CD4-positive, alpha-beta memory T cell (primary cell): ENCODE measurements at regions of chr5 and their contacts with region 1.

Region 1: GRCh38 chr5:43556857-43557542 is at the start of gene PAIP1:
- DNase-seq: peak; percentile 86 to 91 (median 88)
- H3K4me3 ChIP-seq: peak within 1 kb of the TSS; percentile 79 to 84
- H3K4me3 Mint-ChIP-seq: peak within 1 kb of the TSS; percentile 91 to 98 (median 94)
- H3K27ac ChIP-seq: peak within 1 kb of the TSS; percentile 84
- H3K27ac Mint-ChIP-seq: peak within 1 kb of the TSS; percentile 93 to 99 (median 97)
- H3K4me1 ChIP-seq: peaks cover 41% of the 10 kb centered on the region
- H3K4me1 Mint-ChIP-seq: peaks cover 7 to 13% (median 10%) of the 10 kb centered on the region in 4 donors
- H3K27me3 ChIP-seq: no peaks in the 10 kb centered on the region
- H3K27me3 Mint-ChIP-seq: no peaks in the 10 kb centered on the region
- total RNA-seq, gene PAIP1: 36.0 to 38.0 TPM

Region 2: DNA sequence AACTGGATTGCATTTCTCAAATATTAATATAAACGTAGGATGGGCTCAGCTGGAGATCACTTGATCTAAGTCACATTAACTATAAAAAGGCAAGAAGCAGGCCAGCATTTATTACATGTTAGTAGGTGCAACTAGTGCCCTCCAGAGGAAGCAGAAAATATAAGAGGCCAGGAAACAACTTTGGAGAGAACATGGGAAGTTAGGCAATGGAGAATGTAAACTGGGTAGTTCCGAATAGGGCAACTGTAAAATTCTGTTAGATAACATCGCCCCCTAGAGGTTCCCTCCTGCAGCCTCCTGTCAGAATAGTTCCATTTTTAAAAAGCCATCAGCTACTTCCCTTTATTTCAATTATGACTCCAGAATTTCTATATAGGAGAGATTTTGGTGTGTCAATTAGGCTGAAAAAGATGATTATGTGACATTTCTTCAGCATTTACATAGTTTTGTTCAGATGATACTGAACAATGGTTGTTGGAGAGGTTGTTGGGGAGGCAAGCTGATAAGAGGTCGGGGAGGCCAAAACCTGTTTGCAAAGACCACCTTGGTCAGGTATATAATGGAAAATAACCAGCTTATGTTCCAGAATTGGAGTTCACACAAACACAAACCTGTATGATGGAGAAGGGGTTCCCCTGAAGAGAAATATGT is 167.2 kb before region 1 on chr5:
- CTCF ChIA-PET with region 1: no interaction called
- POLR2A ChIA-PET with region 1: no interaction called
- intact Hi-C with region 1: loop called (anchors 5 kb)
- DNase-seq: peak; percentile 45 to 56 (median 53)
- H3K4me3 ChIP-seq: no peak overlapping the region
- H3K4me3 Mint-ChIP-seq: no peak overlapping the region
- H3K27ac ChIP-seq: no peak overlapping the region
- H3K27ac Mint-ChIP-seq: peak overlapping the region in 3 of 7 donors; percentile 0 to 47 (median 31)
- H3K4me1 ChIP-seq: peaks cover 11% of the 10 kb centered on the region
- H3K4me1 Mint-ChIP-seq: peaks cover 6 to 30% (median 21%) of the 10 kb centered on the region in 4 donors
- H3K27me3 ChIP-seq: no peaks in the 10 kb centered on the region
- H3K27me3 Mint-ChIP-seq: no peaks in the 10 kb centered on the region

Region 3: GRCh38 chr5:43514816-43515677 is 42.0 kb before region 1 on chr5 and contains the start of gene C5orf34:
- CTCF ChIA-PET with region 1: no interaction called
- POLR2A ChIA-PET with region 1: interaction called, 7 read pairs
- intact Hi-C with region 1: loop called (anchors 1 kb)
- DNase-seq: peak; percentile 90 to 93 (median 91)
- H3K4me3 ChIP-seq: peak within 1 kb of the TSS; percentile 54 to 92
- H3K4me3 Mint-ChIP-seq: peak within 1 kb of the TSS; percentile 90 to 97 (median 94)
- H3K27ac ChIP-seq: peak within 1 kb of the TSS; percentile 76
- H3K27ac Mint-ChIP-seq: peak within 1 kb of the TSS; percentile 90 to 98 (median 95)
- H3K4me1 ChIP-seq: peaks cover 25% of the 10 kb centered on the region
- H3K4me1 Mint-ChIP-seq: peaks cover 22 to 35% (median 27%) of the 10 kb centered on the region in 4 donors
- H3K27me3 ChIP-seq: no peaks in the 10 kb centered on the region
- H3K27me3 Mint-ChIP-seq: no peaks in the 10 kb centered on the region
- total RNA-seq, gene C5orf34: 2.5 to 2.9 TPM

Region 4: DNA sequence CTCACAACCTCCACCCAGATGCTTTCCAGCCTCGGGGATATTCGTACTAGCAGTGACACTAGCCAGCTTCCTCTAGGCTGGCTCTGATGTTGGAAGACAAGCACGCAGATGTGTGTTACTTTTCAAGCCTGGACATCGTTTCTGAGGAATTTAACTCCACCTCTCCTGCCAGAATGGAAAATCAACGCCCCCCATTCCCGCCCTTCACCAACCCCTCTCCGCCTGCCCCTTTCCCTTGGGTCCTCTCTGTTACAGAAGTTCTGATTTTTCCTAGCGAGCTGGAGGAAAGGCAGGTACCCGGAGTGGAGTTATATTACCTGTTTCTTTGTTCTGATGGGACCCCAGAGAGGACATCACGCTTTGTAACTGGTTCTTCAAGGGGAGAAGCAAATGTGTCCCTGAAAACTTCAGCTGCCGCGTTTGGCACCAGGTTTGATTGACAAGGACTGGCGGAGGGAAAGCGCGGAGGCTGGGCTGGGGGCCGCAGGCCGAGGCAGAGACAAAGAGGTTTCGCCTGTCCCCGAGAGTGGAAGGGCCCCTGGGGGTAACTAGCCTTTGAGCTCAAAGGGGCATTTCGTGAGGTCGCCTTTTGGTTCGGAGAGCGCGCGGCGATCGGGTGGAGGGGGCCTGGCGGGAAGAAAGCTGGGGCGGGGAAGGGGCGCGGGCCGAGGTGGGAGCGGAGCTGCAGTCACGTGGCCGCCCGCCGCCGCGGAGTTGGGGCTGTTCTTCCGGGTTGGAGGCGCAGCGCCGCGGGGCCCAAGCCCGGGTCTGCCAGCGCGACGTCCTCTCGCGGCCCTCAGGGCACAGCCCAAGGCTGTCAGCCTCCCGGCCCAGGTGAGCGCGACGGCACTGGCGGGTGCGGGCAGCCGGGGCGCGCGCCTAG is 45.7 kb after region 1 on chr5 and contains the start of gene NNT:
- CTCF ChIA-PET with region 1: interaction called, 9 read pairs
- POLR2A ChIA-PET with region 1: interaction called, 49 read pairs
- intact Hi-C with region 1: loop called (anchors 1 kb)
- DNase-seq: peak; percentile 75 to 84 (median 80)
- H3K4me3 ChIP-seq: peak within 1 kb of the TSS; percentile 91 to 99
- H3K4me3 Mint-ChIP-seq: peak within 1 kb of the TSS; percentile 90 to 98 (median 96)
- H3K27ac ChIP-seq: peak within 1 kb of the TSS; percentile 88
- H3K27ac Mint-ChIP-seq: peak within 1 kb of the TSS; percentile 91 to 98 (median 94)
- H3K4me1 ChIP-seq: peaks cover 38% of the 10 kb centered on the region
- H3K4me1 Mint-ChIP-seq: peaks cover 18 to 63% (median 49%) of the 10 kb centered on the region in 4 donors
- H3K27me3 ChIP-seq: no peaks in the 10 kb centered on the region
- H3K27me3 Mint-ChIP-seq: no peaks in the 10 kb centered on the region
- total RNA-seq, gene NNT: 56.1 to 57.6 TPM

Region 5: DNA sequence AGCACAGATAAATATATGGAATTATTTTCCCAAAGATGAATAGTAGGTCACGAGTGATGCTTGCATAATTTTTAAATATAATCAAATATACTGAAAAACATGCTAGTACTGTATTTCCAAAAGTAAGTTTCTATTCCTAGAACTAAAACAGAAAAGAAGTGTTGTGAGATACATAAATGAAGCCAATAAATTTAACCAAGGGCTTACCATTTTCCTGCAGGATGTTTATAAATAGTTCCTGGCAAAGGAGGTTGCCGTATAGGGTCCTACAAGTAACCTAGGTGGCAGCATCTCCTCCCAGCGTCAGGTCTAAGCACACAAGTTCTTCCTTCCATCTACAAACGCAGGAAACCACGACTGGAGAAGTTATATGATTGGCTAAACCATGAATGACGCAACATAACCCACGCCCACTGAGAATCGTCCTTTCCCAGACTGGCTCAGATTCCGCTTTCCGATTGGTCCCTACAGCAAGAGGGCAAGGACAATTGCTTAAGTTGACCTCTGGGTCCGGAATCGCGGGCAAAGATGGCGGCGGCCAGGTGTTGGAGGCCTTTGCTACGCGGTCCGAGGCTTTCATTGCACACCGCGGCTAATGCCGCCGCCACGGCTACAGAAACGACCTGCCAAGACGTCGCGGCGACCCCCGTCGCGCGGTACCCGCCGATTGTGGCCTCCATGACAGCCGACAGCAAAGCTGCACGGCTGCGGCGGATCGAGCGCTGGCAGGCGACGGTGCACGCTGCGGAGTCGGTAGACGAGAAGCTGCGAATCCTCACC is 1251.6 kb after region 1 on chr5 and contains the start of gene MRPS30:
- CTCF ChIA-PET with region 1: no interaction called
- POLR2A ChIA-PET with region 1: no interaction called
- intact Hi-C with region 1: loop called (anchors 5 kb)
- DNase-seq: peak; percentile 93 to 96 (median 94)
- H3K4me3 ChIP-seq: peak within 1 kb of the TSS; percentile 90 to 91
- H3K4me3 Mint-ChIP-seq: peak within 1 kb of the TSS; percentile 84 to 97 (median 94)
- H3K27ac ChIP-seq: peak within 1 kb of the TSS; percentile 78
- H3K27ac Mint-ChIP-seq: peak within 1 kb of the TSS; percentile 91 to 98 (median 96)
- H3K4me1 ChIP-seq: peaks cover 21% of the 10 kb centered on the region
- H3K4me1 Mint-ChIP-seq: peaks cover 18 to 38% (median 31%) of the 10 kb centered on the region in 4 donors
- H3K27me3 ChIP-seq: no peaks in the 10 kb centered on the region
- H3K27me3 Mint-ChIP-seq: peaks cover 0 to 2% of the 10 kb centered on the region in 2 donors
- total RNA-seq, gene MRPS30: 54.1 to 56.1 TPM